ENCODE measurements at regions of chr7 and their contacts with region 1.

Region 1: GRCh38 chr7:104923010-104923421 is 91.0 kb upstream of the KMT2E start:
- DNase-seq: peak; percentile 87
- ATAC-seq: peak; percentile 96
- H3K4me3 ChIP-seq: no peak overlapping the region
- H3K27ac ChIP-seq: no peak overlapping the region
- H3K4me1 ChIP-seq: peaks cover 0 to 4% of the 10 kb centered on the region in 2 experiments; a peak in 1 of 4 replicates
- H3K27me3 ChIP-seq: no peaks in the 10 kb centered on the region
- CTCF ChIP-seq: peak; percentile 80 to 86 (median 83)
- POLR2A ChIP-seq: no peak
- RAD21 ChIP-seq: peak; percentile 98

Region 2: DNA sequence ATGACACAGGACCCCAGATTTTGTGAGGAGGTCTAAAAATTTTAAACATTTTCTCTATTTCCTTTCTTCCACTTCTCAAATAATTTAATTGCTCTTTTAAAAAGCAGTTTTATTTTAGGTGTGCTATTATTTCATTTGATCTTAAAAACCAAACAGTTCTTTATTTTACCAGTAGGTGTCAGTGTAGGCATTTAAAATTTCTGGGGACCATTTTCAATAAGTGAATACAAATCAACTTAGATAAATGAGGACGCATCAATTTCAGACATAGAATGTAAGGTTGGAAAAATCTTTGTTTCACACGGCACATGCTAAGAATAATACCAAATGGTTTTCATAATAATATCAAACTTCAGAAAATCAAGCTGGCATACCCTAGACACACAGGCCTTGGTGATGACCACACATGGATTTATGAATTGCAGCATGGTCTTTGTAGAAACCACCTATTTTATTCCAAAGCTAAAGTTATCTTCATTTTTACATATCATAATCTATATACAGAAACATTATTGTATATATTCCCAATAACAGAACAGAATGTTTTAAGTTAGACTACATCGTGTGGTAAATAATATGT is 1349.4 kb before region 1 on chr7:
- CTCF ChIA-PET with region 1: no interaction called
- POLR2A ChIA-PET with region 1: no interaction called
- RAD21 ChIA-PET with region 1: interaction called in 1 of 2 experiments, 4 read pairs
- intact Hi-C with region 1: loop called (anchors 5 kb)
- DNase-seq: peak; percentile 18
- ATAC-seq: no peak
- H3K4me3 ChIP-seq: no peak overlapping the region
- H3K27ac ChIP-seq: no peak overlapping the region
- H3K4me1 ChIP-seq: no peaks in the 10 kb centered on the region
- H3K27me3 ChIP-seq: peaks cover 59% of the 10 kb centered on the region
- CTCF ChIP-seq: peak; percentile 30 to 71 (median 46); a peak in 4 of 6 replicates
- POLR2A ChIP-seq: no peak
- RAD21 ChIP-seq: peak; percentile 61

Region 3: GRCh38 chr7:104643587-104644217 is 279.3 kb before region 1 on chr7:
- CTCF ChIA-PET with region 1: interaction called, 16 read pairs
- POLR2A ChIA-PET with region 1: no interaction called
- RAD21 ChIA-PET with region 1: interaction called, 4 to 5 read pairs
- intact Hi-C with region 1: loop called (anchors 1 kb)
- DNase-seq: peak; percentile 15
- ATAC-seq: peak; percentile 67
- H3K4me3 ChIP-seq: no peak overlapping the region
- H3K27ac ChIP-seq: no peak overlapping the region
- H3K4me1 ChIP-seq: no peaks in the 10 kb centered on the region
- H3K27me3 ChIP-seq: peaks cover 53% of the 10 kb centered on the region
- CTCF ChIP-seq: peak; percentile 49 to 77 (median 77); a peak in 5 of 6 replicates
- POLR2A ChIP-seq: no peak
- RAD21 ChIP-seq: peak; percentile 54

Region 4: GRCh38 chr7:105046414-105046813 is 123.4 kb after region 1 on chr7:
- CTCF ChIA-PET with region 1: no interaction called
- POLR2A ChIA-PET with region 1: no interaction called
- RAD21 ChIA-PET with region 1: no interaction called
- intact Hi-C with region 1: loop called (anchors 1 kb)
- DNase-seq: no peak
- ATAC-seq: no peak
- H3K4me3 ChIP-seq: no peak overlapping the region
- H3K27ac ChIP-seq: no peak overlapping the region
- H3K4me1 ChIP-seq: no peaks in the 10 kb centered on the region
- H3K27me3 ChIP-seq: no peaks in the 10 kb centered on the region
- CTCF ChIP-seq: no peak
- POLR2A ChIP-seq: no peak
- RAD21 ChIP-seq: no peak

Region 5: GRCh38 chr7:105429746-105430612 is 507.0 kb after region 1 on chr7:
- CTCF ChIA-PET with region 1: no interaction called
- POLR2A ChIA-PET with region 1: no interaction called
- RAD21 ChIA-PET with region 1: no interaction called
- intact Hi-C with region 1: loop called (anchors 2 kb)
- DNase-seq: peak; percentile 34
- ATAC-seq: peak; percentile 85
- H3K4me3 ChIP-seq: no peak overlapping the region
- H3K27ac ChIP-seq: no peak overlapping the region
- H3K4me1 ChIP-seq: no peaks in the 10 kb centered on the region
- H3K27me3 ChIP-seq: no peaks in the 10 kb centered on the region
- CTCF ChIP-seq: peak; percentile 51 to 76 (median 66)
- POLR2A ChIP-seq: no peak
- RAD21 ChIP-seq: peak; percentile 84

Region 6: DNA sequence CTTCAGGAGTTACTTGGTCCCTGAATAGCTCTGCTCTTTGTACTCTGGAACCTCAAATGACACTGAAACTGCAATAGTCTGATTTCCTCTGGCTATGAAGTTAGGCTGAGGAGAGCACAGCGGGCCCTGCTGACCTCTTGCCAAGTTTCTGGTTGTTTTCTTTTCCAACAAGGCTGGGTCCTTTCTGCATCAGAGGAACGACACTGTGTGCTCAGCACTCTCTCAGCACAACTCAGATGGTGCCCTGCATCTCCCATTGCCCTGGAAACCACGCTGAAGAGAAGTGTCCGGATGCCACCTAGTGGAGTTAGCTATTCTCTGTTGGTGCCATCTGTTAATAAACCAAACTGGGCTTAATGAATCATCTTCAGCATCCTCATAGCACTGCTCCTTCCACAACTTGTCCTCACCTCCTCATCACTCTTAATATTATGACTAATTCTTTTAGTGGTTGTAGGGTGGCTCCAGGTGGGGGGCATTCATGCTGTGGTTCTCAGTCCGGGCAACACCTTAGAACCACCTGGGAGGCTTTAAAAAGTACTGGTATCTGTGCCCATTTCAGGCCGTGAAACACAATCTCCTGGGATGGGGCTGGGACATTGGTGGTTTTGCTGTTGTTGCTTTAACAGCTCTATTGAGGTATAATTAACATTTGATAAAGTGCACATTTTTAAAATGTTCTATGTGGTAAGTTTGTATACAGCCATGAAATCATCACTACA is 666.5 kb after region 1 on chr7:
- CTCF ChIA-PET with region 1: interaction called, 3 read pairs
- POLR2A ChIA-PET with region 1: no interaction called
- RAD21 ChIA-PET with region 1: no interaction called
- intact Hi-C with region 1: loop called (anchors 2 kb)
- DNase-seq: peak; percentile 55
- ATAC-seq: peak; percentile 98
- H3K4me3 ChIP-seq: no peak overlapping the region
- H3K27ac ChIP-seq: no peak overlapping the region
- H3K4me1 ChIP-seq: no peaks in the 10 kb centered on the region
- H3K27me3 ChIP-seq: no peaks in the 10 kb centered on the region
- CTCF ChIP-seq: peak; percentile 71 to 76 (median 73)
- POLR2A ChIP-seq: no peak
- RAD21 ChIP-seq: peak; percentile 91

Measured in HCT116 (cell line).